Lower leg skin (tissue), 4 donors: ENCODE measurements at regions of chr2 and their contacts with region 1.

Region 1: GRCh38 chr2:85551698-85552678 is 9.3 kb downstream of the GGCX start:
- DNase-seq: peak; percentile 86 to 97
- H3K4me3 ChIP-seq: no peak overlapping the region
- CTCF ChIP-seq: peak in 1 of 3 donors; percentile 86
- POLR2A ChIP-seq: no peak

Region 2: DNA sequence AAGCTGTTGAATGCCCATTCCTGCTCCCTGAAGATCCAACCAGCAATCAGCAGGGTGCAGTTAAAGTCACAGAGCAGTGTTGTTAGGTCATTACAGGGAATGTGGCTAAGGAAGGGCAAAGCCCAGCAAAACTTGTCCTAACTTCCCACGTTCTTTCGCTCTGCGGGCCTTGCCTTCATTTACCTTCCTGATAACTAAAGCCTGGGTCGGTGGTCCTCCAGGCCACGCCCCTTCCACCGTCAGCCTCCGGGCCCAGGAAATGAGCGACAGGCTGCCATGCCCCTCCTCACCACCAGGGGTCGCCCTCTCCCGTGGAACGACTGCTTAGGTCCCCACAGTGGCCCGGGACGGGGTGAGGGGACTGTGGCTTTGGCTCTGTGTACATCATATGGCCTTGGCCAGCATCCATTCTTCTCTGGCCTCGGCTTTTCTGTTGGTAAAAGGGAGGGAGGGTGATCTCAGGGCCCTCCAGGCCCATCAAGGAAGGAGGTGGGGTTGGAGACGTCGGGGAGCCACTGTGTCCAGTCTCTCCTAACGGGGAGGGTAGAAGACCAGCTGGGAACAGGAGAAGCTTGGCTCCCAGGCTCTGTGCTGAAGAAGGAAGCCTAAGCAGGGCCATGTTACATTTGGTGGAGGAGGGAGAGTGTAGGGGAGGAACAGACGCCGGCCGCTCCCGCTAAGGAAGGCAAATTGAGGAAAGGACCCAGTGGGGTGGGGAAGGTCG is 131.3 kb before region 1 on chr2:
- intact Hi-C with region 1: loop called (anchors 2 kb)
- DNase-seq: peak; percentile 87 to 98
- H3K4me3 ChIP-seq: no peak overlapping the region
- CTCF ChIP-seq: peak in 2 of 3 donors; percentile 91 to 99
- POLR2A ChIP-seq: no peak

Region 3: GRCh38 chr2:85602476-85603234 is 50.7 kb after region 1 on chr2 and contains the start of gene TMEM150A:
- intact Hi-C with region 1: no loop called
- DNase-seq: peak; percentile 92 to 99
- H3K4me3 ChIP-seq: peak within 1 kb of the TSS; percentile 74
- CTCF ChIP-seq: no peak
- POLR2A ChIP-seq: peak in 1 of 2 donors; percentile 15
- total RNA-seq, gene TMEM150A: 5.8 to 13.7 (median 9.5) TPM